GM12878 (cell line): ENCODE measurements at regions of chr12 and their contacts with region 1.

Region 1: GRCh38 chr12:105107494-105108371 is at the start of gene WASHC4:
- DNase-seq: peak; percentile 68
- ATAC-seq: peak; percentile 94
- H3K4me3 ChIP-seq: peak within 1 kb of the TSS; percentile 88
- H3K27ac ChIP-seq: peak within 1 kb of the TSS; percentile 88
- H3K4me1 ChIP-seq: peaks cover 4% of the 10 kb centered on the region; the same call in 1 of the 2 replicates
- H3K27me3 ChIP-seq: no peaks in the 10 kb centered on the region
- CTCF ChIP-seq: peak in 1 of 3 experiments; percentile 14; a peak in 1 of 6 replicates
- EP300 ChIP-seq: no peak
- POLR2A ChIP-seq: peak; percentile 100
- RAD21 ChIP-seq: no peak
- polyA plus RNA-seq, gene WASHC4: 16.0 to 18.4 TPM

Region 2: GRCh38 chr12:104137913-104138796 is 969.6 kb before region 1 on chr12 and contains the start of gene NFYB:
- CTCF ChIA-PET with region 1: no interaction called
- POLR2A ChIA-PET with region 1: interaction called, 10 read pairs
- RAD21 ChIA-PET with region 1: no interaction called
- SMC1A ChIA-PET with region 1: no interaction called
- in situ Hi-C with region 1: no loop called
- intact Hi-C with region 1: no loop called
- DNase-seq: peak; percentile 83
- ATAC-seq: peak; percentile 96
- H3K4me3 ChIP-seq: peak within 1 kb of the TSS; percentile 88
- H3K27ac ChIP-seq: peak within 1 kb of the TSS; percentile 89
- H3K4me1 ChIP-seq: peaks cover 3% of the 10 kb centered on the region; the same call in 1 of the 2 replicates
- H3K27me3 ChIP-seq: no peaks in the 10 kb centered on the region
- CTCF ChIP-seq: no peak
- EP300 ChIP-seq: peak in 1 of 2 experiments; percentile 100; a peak in 2 of 4 replicates
- POLR2A ChIP-seq: peak; percentile 81
- RAD21 ChIP-seq: no peak
- polyA plus RNA-seq, gene NFYB: 27.5 to 42.3 TPM

Region 3: GRCh38 chr12:104462931-104463339 is 644.8 kb before region 1 on chr12:
- CTCF ChIA-PET with region 1: interaction called, 4 read pairs
- POLR2A ChIA-PET with region 1: no interaction called
- RAD21 ChIA-PET with region 1: no interaction called
- SMC1A ChIA-PET with region 1: interaction called, 3 read pairs
- in situ Hi-C with region 1: no loop called
- intact Hi-C with region 1: loop called (anchors 10 kb)
- DNase-seq: peak; percentile 88
- ATAC-seq: peak; percentile 52
- H3K4me3 ChIP-seq: peak overlapping the region; percentile 53
- H3K27ac ChIP-seq: peak overlapping the region; percentile 80
- H3K4me1 ChIP-seq: peaks cover 50% of the 10 kb centered on the region
- H3K27me3 ChIP-seq: no peaks in the 10 kb centered on the region
- CTCF ChIP-seq: no peak
- EP300 ChIP-seq: peak; percentile 25 to 85; a peak in 3 of 4 replicates
- POLR2A ChIP-seq: no peak
- RAD21 ChIP-seq: no peak